Dorsolateral prefrontal cortex (tissue), 120 donors: ENCODE measurements at regions of chr10 and their contacts with region 1.

Region 1: DNA sequence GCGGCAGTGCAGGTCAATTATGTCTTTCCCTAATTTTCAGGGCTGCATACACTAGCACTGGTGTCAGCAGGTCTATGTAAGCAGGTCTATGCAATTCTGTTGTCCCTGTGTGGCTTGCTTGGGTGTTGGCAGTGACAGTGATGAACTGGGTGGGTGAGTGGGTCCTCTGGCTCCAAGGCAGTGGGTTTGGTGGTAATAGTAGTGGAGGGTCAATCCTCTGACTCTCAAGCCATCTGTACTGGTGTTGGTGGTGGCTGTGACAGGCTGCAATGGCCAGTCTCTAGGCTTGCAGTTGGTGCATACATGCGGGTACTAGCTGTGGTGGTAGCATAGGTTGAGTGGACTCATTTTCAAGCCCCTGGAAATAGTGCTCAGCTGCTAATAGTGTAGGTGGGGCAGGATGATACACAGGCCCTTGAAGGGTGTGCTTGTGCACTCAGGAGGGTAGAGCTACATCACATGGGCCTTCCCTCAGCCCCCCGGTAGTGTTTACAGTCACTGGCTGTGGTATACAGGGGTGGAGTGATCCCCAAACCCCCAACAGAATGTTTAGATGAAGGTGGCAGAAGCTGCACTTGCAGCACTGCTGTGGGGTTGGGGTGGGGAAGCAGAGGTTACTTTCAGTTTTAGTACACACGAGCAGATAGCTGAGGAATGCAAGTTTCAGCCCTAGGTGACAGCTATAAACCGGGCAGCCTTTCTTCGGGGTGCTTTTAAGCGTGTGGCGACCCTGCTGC is 331.3 kb downstream of the PCDH15 start:
- DNase-seq: no peak
- H3K4me3 ChIP-seq: no peak overlapping the region
- H3K27ac ChIP-seq: no peak overlapping the region
- H3K27me3 ChIP-seq: peaks cover 0 to 5% (median 0%) of the 10 kb centered on the region in 45 donors
- CTCF ChIP-seq: no peak

Region 2: DNA sequence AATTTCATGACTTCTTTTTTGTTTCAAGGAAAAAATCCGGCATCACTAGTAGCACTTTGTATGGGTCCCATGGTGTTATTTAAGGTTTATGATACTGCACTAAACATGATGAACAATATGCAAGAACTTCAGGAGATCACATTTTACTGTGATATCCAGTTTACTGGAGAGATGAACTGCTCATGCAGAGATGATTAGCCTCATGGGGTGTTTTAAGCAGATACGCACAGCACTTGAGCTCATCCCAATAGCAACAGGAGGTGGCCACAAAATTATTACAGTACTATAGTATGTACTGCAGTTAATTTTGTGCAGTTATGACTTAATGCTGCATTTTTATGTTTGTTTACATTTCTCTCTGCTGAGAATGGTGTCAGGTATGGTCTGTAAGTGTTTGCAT is 635.0 kb after region 1 on chr10:
- intact Hi-C with region 1: loop called in 1 of 2 experiments (anchors 10 kb)
- DNase-seq: no peak
- H3K4me3 ChIP-seq: no peak overlapping the region
- H3K27ac ChIP-seq: no peak overlapping the region
- H3K27me3 ChIP-seq: no peaks in the 10 kb centered on the region
- CTCF ChIP-seq: no peak